CD8-positive, alpha-beta memory T cell (primary cell): ENCODE measurements at regions of chr11 and their contacts with region 1.

Region 1: GRCh38 chr11:75577207-75577606 is 15.2 kb downstream of the SERPINH1 start:
- DNase-seq: peak; percentile 29 to 72 (median 45)
- H3K4me3 ChIP-seq: no peak overlapping the region
- H3K4me3 Mint-ChIP-seq: peak overlapping the region in 1 of 7 donors; percentile 23
- H3K27ac ChIP-seq: no peak overlapping the region
- H3K27ac Mint-ChIP-seq: no peak overlapping the region
- H3K4me1 ChIP-seq: no peaks in the 10 kb centered on the region
- H3K4me1 Mint-ChIP-seq: peaks cover 5 to 6% (median 5%) of the 10 kb centered on the region in 3 donors
- H3K27me3 ChIP-seq: no peaks in the 10 kb centered on the region
- H3K27me3 Mint-ChIP-seq: peaks cover 2 to 4% of the 10 kb centered on the region in 2 donors

Region 2: DNA sequence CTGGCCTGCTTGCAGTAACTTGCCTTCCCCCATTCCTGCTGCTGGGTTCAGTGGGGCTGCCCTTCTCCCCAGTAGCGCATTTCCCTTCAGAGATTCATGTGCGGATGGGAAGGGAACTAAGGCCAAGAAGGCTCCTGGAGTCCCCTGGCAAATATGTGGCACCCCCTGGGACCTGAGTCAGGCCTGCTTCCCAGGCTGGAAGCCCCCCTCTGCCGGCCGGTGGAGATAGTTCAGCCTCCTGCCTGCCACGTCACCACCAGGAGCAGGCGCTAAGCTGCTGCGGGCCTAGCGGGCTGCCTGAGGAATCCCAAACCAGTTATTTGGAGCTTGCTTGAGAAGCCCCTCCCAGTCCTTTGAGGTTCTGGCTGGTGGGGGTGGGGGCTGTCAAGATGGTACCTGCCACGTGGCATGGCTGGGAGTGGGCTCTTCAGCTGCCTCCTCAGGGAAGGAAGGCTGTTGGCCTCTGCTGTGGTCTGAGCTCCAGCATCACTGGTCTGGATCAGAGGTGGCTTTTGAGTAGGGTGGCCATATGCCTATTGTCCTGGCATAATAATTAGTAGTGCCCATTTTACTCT is 13.1 kb before region 1 on chr11:
- CTCF ChIA-PET with region 1: interaction called, 44 read pairs
- POLR2A ChIA-PET with region 1: no interaction called
- DNase-seq: no peak
- H3K4me3 ChIP-seq: no peak overlapping the region
- H3K4me3 Mint-ChIP-seq: peak overlapping the region; percentile 92 to 100 (median 99)
- H3K27ac ChIP-seq: peak overlapping the region; percentile 90
- H3K27ac Mint-ChIP-seq: peak overlapping the region; percentile 57 to 97 (median 88)
- H3K4me1 ChIP-seq: peaks cover 27% of the 10 kb centered on the region
- H3K4me1 Mint-ChIP-seq: peaks cover 41 to 61% (median 52%) of the 10 kb centered on the region in 3 donors
- H3K27me3 ChIP-seq: no peaks in the 10 kb centered on the region
- H3K27me3 Mint-ChIP-seq: peaks cover 0 to 4% of the 10 kb centered on the region in 2 donors

Region 3: DNA sequence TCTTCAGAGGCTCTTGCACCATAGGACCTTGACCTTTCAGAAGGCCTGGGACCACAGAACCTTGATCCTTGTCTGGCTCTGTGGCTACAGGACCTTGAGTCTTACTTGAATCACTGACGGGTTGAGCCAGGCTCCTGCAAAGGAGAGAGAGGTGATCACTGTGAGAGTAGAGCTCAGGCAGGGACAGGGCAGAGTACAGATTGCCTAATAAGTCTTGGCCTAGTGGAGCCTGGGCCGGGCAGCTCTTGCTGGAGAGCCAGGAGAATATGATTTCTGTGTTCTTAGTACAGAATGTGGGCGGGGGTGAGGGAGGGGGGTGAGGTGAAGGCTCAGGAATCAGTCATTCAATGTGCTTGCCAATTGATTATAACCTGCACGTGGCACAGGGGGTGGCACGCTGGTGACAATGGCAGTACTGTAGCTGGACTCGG is 10.9 kb after region 1 on chr11:
- CTCF ChIA-PET with region 1: interaction called, 13 read pairs
- POLR2A ChIA-PET with region 1: no interaction called
- DNase-seq: no peak
- H3K4me3 ChIP-seq: no peak overlapping the region
- H3K4me3 Mint-ChIP-seq: no peak overlapping the region
- H3K27ac ChIP-seq: no peak overlapping the region
- H3K27ac Mint-ChIP-seq: peak overlapping the region in 1 of 8 donors; percentile 12
- H3K4me1 ChIP-seq: peaks cover 6% of the 10 kb centered on the region
- H3K4me1 Mint-ChIP-seq: peaks cover 13 to 18% (median 14%) of the 10 kb centered on the region in 3 donors
- H3K27me3 ChIP-seq: no peaks in the 10 kb centered on the region
- H3K27me3 Mint-ChIP-seq: peaks cover 0 to 4% of the 10 kb centered on the region in 2 donors

Region 4: DNA sequence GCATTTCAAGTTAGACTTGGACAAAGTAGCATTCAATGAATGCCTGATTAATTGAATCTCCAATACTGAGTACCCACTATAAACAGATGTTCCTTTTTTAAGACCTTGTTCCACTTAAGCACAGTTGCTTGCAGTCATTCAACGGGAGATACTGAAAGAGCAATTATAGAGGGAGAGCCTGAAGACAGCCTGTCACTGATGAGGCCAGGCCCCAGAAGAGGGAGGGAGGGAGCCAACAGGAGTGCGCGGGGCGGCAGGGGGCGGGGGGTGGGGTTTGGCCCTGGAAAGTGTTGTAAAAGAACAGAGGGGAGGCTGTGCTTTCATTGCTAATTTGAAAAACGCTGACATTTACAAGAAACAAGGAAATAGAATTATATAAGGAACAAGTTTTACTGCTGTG is 38.5 kb after region 1 on chr11:
- CTCF ChIA-PET with region 1: no interaction called
- POLR2A ChIA-PET with region 1: no interaction called
- DNase-seq: no peak
- H3K4me3 ChIP-seq: no peak overlapping the region
- H3K4me3 Mint-ChIP-seq: no peak overlapping the region
- H3K27ac ChIP-seq: no peak overlapping the region
- H3K27ac Mint-ChIP-seq: no peak overlapping the region
- H3K4me1 ChIP-seq: no peaks in the 10 kb centered on the region
- H3K4me1 Mint-ChIP-seq: no peaks in the 10 kb centered on the region
- H3K27me3 ChIP-seq: no peaks in the 10 kb centered on the region
- H3K27me3 Mint-ChIP-seq: peaks cover 11 to 26% of the 10 kb centered on the region in 2 donors

Region 5: DNA sequence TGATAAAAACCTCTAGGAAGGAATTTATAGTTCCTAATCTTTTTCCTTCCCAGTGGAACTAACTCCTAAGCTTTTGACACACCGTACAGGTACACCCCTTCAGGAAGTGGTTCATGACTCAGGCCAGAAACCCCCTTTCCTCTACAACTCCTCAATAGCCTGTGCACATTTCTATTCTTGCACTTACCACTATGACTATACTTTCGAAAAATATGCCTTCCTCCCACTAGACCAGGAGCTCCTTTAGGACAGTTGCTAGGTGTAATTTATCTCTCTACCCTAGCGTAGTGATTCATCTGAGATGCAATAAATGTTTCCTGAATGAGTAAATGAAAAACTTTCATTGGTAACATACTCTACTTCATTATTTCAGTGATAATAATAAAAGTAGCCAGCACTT is 77.1 kb after region 1 on chr11:
- CTCF ChIA-PET with region 1: no interaction called
- POLR2A ChIA-PET with region 1: no interaction called
- DNase-seq: no peak
- H3K4me3 ChIP-seq: no peak overlapping the region
- H3K4me3 Mint-ChIP-seq: no peak overlapping the region
- H3K27ac ChIP-seq: no peak overlapping the region
- H3K27ac Mint-ChIP-seq: no peak overlapping the region
- H3K4me1 ChIP-seq: no peaks in the 10 kb centered on the region
- H3K4me1 Mint-ChIP-seq: no peaks in the 10 kb centered on the region
- H3K27me3 ChIP-seq: no peaks in the 10 kb centered on the region
- H3K27me3 Mint-ChIP-seq: peaks cover 0 to 16% of the 10 kb centered on the region in 2 donors

Region 6: GRCh38 chr11:75802913-75803820 is 226.0 kb after region 1 on chr11:
- CTCF ChIA-PET with region 1: no interaction called
- POLR2A ChIA-PET with region 1: no interaction called
- DNase-seq: peak; percentile 47 to 77 (median 56)
- H3K4me3 ChIP-seq: no peak overlapping the region
- H3K4me3 Mint-ChIP-seq: no peak overlapping the region
- H3K27ac ChIP-seq: no peak overlapping the region
- H3K27ac Mint-ChIP-seq: no peak overlapping the region
- H3K4me1 ChIP-seq: peaks cover 12% of the 10 kb centered on the region
- H3K4me1 Mint-ChIP-seq: peaks cover 6 to 14% (median 9%) of the 10 kb centered on the region in 3 donors
- H3K27me3 ChIP-seq: no peaks in the 10 kb centered on the region
- H3K27me3 Mint-ChIP-seq: peaks cover 2 to 3% of the 10 kb centered on the region in 2 donors